ENCODE measurements at regions of chr1 and their contacts with region 1.

Region 1: DNA sequence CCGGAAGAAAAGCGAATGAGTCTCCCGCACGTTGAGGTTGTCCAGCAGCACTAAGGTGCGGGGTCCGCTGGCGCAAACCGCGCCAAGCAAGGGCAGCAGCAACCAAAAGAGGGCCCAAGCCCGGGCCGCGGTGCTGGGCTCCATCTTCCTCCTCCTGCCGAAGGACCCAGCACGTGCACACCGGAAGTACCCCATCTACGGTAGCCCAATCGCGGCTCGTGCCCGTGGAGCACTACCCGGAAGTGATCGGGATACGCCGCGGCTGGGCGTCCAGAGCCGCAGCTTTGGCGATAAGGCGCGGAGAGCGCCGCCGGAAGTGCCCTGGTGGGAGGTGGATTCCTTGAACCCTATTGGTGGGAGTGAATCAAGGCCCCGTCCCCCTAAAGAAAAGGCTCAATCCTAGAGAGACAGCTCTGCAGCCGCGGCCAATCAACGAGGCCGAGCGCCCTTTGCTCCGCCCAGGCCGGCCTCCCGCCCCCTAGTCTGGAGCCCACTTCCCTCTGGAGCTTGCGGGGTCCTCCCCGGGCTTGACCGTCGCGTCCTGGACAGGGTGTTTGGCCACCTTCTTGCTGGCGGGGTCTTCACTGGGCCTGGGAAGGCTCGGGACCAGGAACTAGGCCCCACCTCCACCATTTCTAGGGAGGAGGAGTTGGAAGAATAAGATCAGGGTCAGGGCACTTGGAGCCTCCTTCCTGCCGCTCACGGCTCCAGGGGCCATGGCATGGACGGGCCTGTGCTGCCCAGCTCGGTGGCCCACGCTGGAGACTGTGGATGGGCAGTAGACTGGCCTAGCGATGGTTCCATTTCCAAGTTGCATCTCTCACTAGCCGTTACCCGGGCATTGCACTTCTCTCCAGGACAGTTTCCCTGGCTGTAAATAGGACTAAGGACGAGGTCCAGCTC is at the start of gene DDOST:
- DNase-seq: peak; percentile 98
- H3K4me3 Mint-ChIP-seq: peak within 1 kb of the TSS; percentile 96
- H3K27ac Mint-ChIP-seq: peak within 1 kb of the TSS; percentile 69
- H3K4me1 Mint-ChIP-seq: peaks cover 26% of the 10 kb centered on the region
- H3K27me3 Mint-ChIP-seq: no peaks in the 10 kb centered on the region
- CTCF ChIP-seq: no peak
- total RNA-seq, gene DDOST: 292 and 397 TPM in 2 replicates

Region 2: GRCh38 chr1:20648438-20648837 is 13.0 kb before region 1 on chr1:
- CTCF ChIA-PET with region 1: no interaction called
- POLR2A ChIA-PET with region 1: interaction called, 14 read pairs
- intact Hi-C with region 1: no loop called
- DNase-seq: no peak
- H3K4me3 Mint-ChIP-seq: no peak overlapping the region
- H3K27ac Mint-ChIP-seq: no peak overlapping the region
- H3K4me1 Mint-ChIP-seq: no peaks in the 10 kb centered on the region
- H3K27me3 Mint-ChIP-seq: no peaks in the 10 kb centered on the region
- CTCF ChIP-seq: no peak

Measured in MCF 10A (cell line).